ENCODE measurements at regions of chr1 and their contacts with region 1.

Region 1: DNA sequence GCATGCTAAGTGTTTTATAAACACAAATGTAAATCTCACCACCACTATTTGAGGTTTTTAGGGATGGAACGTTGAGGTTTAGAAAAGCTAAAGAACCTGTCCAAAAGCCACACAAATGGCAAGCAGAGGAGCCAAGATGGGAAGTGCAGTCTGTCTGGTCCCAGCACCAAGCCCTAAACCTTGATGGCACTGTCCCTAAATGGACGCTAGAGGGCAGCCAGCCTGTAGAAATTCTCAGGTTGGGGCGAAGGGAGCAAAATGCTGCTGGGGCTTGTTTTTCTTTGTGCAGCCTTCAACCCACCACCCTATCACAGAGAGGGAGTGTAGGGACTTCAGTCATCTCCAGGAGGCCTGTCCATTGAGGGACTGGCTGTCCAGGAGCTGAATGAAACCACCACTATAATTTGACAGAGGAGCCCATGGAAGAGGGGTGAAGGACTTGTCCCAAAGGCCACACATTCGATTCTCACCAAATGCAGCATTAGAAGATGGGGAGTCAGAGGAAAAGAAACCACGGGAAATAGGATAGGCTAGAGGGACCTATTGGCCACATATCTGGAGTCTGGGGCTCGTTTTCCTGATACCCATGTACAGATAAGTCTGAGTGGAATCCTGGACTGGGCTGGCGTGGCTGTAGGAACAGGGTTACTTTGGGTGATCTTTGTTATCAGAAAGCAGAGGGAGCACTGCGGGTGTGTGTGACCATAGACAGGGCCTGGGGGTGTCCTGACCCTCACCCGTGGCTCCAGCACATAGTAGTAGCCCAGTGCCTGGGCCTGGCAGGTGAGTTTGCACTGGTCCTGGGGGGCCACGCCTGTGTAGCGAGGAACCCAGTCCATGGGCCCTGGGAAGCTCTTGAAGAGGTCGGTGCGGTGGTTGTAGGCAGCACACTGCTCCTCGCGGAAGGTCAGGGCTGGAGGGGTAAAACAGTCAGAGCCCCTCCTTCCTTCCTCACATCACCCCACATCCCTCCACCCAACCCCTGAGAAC is 6.1 kb downstream of the ADAMTS4 start:
- DNase-seq: peak; percentile 88
- H3K4me3 Mint-ChIP-seq: no peak overlapping the region
- H3K27ac Mint-ChIP-seq: peak overlapping the region; percentile 71
- H3K4me1 Mint-ChIP-seq: peaks cover 20% of the 10 kb centered on the region
- H3K27me3 Mint-ChIP-seq: no peaks in the 10 kb centered on the region
- CTCF ChIP-seq: peak; percentile 92

Region 2: DNA sequence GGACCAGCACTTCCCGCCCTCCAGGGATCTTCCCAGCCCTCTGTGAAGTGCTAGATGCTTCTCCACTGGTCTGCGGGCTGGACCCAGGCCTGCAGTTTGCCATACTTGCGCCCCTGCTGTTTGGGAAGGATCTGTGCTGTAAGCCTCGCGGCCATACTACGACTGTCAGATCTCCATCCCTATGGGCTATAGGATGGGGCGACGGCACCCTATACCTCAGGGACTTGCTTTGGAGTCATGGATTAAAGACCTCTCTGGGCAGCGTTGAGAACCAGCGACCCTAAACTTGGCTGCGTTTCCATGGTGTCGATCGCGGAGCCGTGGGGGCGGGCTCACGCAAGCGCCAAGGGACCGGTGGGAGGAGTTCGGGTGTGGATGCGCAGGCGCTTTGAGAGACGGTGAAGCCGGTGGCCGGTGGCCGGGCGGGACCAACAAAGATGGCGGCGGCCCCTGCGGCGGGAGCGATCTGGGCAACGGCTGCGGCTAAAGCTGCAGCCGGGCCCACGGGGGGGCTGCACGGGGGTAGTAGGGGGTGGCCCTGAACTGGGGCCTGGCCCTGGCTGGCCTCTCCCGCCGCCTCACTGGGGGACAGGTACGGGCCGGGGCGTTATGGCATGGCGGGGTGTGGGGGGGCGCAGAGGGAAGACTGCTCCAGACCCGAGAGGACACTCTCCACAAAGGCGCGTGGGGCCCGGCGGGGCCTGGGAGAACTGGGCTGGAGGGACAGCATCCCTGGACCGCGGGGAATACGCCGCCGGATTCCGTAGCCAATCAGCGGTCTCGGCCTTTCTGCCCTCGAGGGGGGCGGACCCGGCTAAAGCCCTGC is 33.5 kb before region 1 on chr1 and contains the start of gene USP21:
- CTCF ChIA-PET with region 1: interaction called, 11 read pairs
- POLR2A ChIA-PET with region 1: no interaction called
- intact Hi-C with region 1: no loop called
- DNase-seq: peak; percentile 94
- H3K4me3 Mint-ChIP-seq: peak within 1 kb of the TSS; percentile 87
- H3K27ac Mint-ChIP-seq: peak within 1 kb of the TSS; percentile 94
- H3K4me1 Mint-ChIP-seq: peaks cover 45% of the 10 kb centered on the region
- H3K27me3 Mint-ChIP-seq: no peaks in the 10 kb centered on the region
- CTCF ChIP-seq: peak; percentile 55
- total RNA-seq, gene USP21: 33.8 and 36.6 TPM in 2 replicates

Region 3: DNA sequence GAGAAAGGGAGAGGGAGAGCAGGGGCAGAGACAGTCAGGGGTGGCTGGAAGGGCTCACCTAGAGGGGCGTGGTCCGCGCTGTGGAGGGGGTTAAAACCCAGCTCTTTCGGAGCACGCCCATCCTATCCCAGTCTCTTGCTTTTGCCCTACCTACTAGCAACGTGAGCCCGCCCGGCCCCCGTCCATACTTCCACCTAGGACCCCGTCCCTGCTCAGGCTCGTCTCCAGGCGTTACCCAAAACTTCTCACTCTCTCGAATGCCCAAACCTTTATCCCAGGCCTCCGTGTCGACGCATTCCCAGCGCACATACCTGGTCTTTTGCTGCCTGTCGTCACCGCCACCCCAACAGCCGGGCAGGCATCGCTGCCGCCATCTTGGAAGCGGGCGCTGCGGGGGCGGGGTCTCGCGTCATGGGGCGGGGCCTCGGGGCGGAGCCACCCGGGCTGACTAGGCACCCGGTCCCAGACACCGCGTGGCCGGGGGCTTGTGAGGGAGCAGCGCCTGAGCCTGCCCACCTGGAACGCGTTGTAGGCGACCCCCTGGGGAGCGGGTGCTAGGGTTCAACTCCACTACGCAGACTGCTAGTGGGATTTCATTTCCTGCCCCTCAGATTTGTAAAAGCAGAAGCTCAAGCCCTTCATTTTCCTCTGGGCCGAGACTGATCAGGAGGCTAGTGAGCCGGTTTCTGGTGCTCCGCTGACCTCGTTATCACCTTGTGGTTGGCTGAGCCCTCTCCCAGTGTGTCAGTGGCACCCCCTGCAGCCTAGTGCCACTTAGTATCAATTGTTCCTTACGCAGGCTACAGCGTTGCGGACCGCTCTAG is 15.4 kb before region 1 on chr1 and contains the start of gene B4GALT3:
- CTCF ChIA-PET with region 1: interaction called, 115 read pairs
- POLR2A ChIA-PET with region 1: interaction called, 6 read pairs
- intact Hi-C with region 1: loop called (anchors 1 kb)
- DNase-seq: peak; percentile 87
- H3K4me3 Mint-ChIP-seq: peak within 1 kb of the TSS; percentile 86
- H3K27ac Mint-ChIP-seq: peak within 1 kb of the TSS; percentile 92
- H3K4me1 Mint-ChIP-seq: peaks cover 37% of the 10 kb centered on the region
- H3K27me3 Mint-ChIP-seq: no peaks in the 10 kb centered on the region
- CTCF ChIP-seq: no peak
- total RNA-seq, gene B4GALT3: 50.0 and 51.7 TPM in 2 replicates

Region 4: GRCh38 chr1:161216945-161217712 is 24.4 kb after region 1 on chr1:
- CTCF ChIA-PET with region 1: interaction called, 154 read pairs
- POLR2A ChIA-PET with region 1: no interaction called
- intact Hi-C with region 1: no loop called
- DNase-seq: peak; percentile 79
- H3K4me3 Mint-ChIP-seq: no peak overlapping the region
- H3K27ac Mint-ChIP-seq: no peak overlapping the region
- H3K4me1 Mint-ChIP-seq: peaks cover 6% of the 10 kb centered on the region
- H3K27me3 Mint-ChIP-seq: no peaks in the 10 kb centered on the region
- CTCF ChIP-seq: no peak

Region 5: GRCh38 chr1:161374373-161374772 is 181.6 kb after region 1 on chr1:
- CTCF ChIA-PET with region 1: interaction called, 96 read pairs
- POLR2A ChIA-PET with region 1: interaction called, 3 read pairs
- intact Hi-C with region 1: no loop called
- DNase-seq: peak; percentile 33
- H3K4me3 Mint-ChIP-seq: no peak overlapping the region
- H3K27ac Mint-ChIP-seq: no peak overlapping the region
- H3K4me1 Mint-ChIP-seq: no peaks in the 10 kb centered on the region
- H3K27me3 Mint-ChIP-seq: no peaks in the 10 kb centered on the region
- CTCF ChIP-seq: peak; percentile 38

Region 6: GRCh38 chr1:162019006-162019405 is 826.2 kb after region 1 on chr1:
- CTCF ChIA-PET with region 1: no interaction called
- POLR2A ChIA-PET with region 1: no interaction called
- intact Hi-C with region 1: no loop called
- DNase-seq: peak; percentile 84
- H3K4me3 Mint-ChIP-seq: no peak overlapping the region
- H3K27ac Mint-ChIP-seq: no peak overlapping the region
- H3K4me1 Mint-ChIP-seq: peaks cover 10% of the 10 kb centered on the region
- H3K27me3 Mint-ChIP-seq: peaks cover 42% of the 10 kb centered on the region
- CTCF ChIP-seq: no peak

Measured in MCF 10A (cell line).